ENCODE measurements at regions of chr11 and their contacts with region 1.

Region 1: GRCh38 chr11:65540297-65541092 is 15.6 kb downstream of the SCYL1 start:
- DNase-seq: peak in 1 of 2 experiments; percentile 98
- H3K4me3 ChIP-seq: peak overlapping the region; percentile 32 to 68 (median 46)
- H3K27ac ChIP-seq: no peak overlapping the region
- H3K4me1 ChIP-seq: peaks cover 0 to 9% (median 1%) of the 10 kb centered on the region in 4 experiments; a peak in 5 of 7 replicates
- H3K27me3 ChIP-seq: peaks cover 0 to 38% (median 21%) of the 10 kb centered on the region in 4 experiments; a peak in 6 of 7 replicates
- CTCF ChIP-seq: peak in 2 of 3 experiments; percentile 75 to 88; a peak in 3 of 4 replicates
- EP300 ChIP-seq: no peak
- POLR2A ChIP-seq: no peak; a peak in 1 of 3 replicates
- RAD21 ChIP-seq: peak; percentile 74 to 81

Region 2: GRCh38 chr11:65506770-65507505 is 33.6 kb before region 1 on chr11:
- CTCF ChIA-PET with region 1: interaction called, 3 read pairs
- POLR2A ChIA-PET with region 1: interaction called, 10 read pairs
- DNase-seq: peak in 1 of 2 experiments; percentile 63
- H3K4me3 ChIP-seq: no peak overlapping the region
- H3K27ac ChIP-seq: no peak overlapping the region
- H3K4me1 ChIP-seq: peaks cover 0 to 7% (median 3%) of the 10 kb centered on the region in 4 experiments; a peak in 4 of 7 replicates
- H3K27me3 ChIP-seq: no peaks in the 10 kb centered on the region
- CTCF ChIP-seq: no peak
- EP300 ChIP-seq: no peak
- POLR2A ChIP-seq: peak; percentile 71 to 98
- RAD21 ChIP-seq: no peak

Region 3: GRCh38 chr11:65530157-65530496 is 10.4 kb before region 1 on chr11:
- CTCF ChIA-PET with region 1: interaction called, 15 read pairs
- POLR2A ChIA-PET with region 1: interaction called, 62 read pairs
- DNase-seq: no peak
- H3K4me3 ChIP-seq: no peak overlapping the region
- H3K27ac ChIP-seq: no peak overlapping the region
- H3K4me1 ChIP-seq: peaks cover 0 to 7% (median 5%) of the 10 kb centered on the region in 4 experiments; a peak in 5 of 7 replicates
- H3K27me3 ChIP-seq: no peaks in the 10 kb centered on the region
- CTCF ChIP-seq: peak in 2 of 3 experiments; percentile 49 to 71; a peak in 2 of 4 replicates
- EP300 ChIP-seq: no peak
- POLR2A ChIP-seq: no peak
- RAD21 ChIP-seq: peak; percentile 5 to 46; a peak in 2 of 4 replicates

Region 4: GRCh38 chr11:65558002-65558931 is 17.8 kb after region 1 on chr11 and contains the start of gene LTBP3:
- CTCF ChIA-PET with region 1: interaction called, 284 read pairs
- POLR2A ChIA-PET with region 1: interaction called, 29 read pairs
- DNase-seq: peak in 1 of 2 experiments; percentile 72
- H3K4me3 ChIP-seq: peak within 1 kb of the TSS; percentile 39 to 77 (median 48)
- H3K27ac ChIP-seq: no peak within 1 kb of the TSS
- H3K4me1 ChIP-seq: peaks cover 0 to 51% (median 39%) of the 10 kb centered on the region in 4 experiments; a peak in 6 of 7 replicates
- H3K27me3 ChIP-seq: peaks cover 0 to 32% (median 21%) of the 10 kb centered on the region in 4 experiments; a peak in 5 of 7 replicates
- CTCF ChIP-seq: no peak
- EP300 ChIP-seq: no peak
- POLR2A ChIP-seq: no peak
- RAD21 ChIP-seq: no peak
- total RNA-seq, gene LTBP3: 12.8 and 15.3 TPM in 2 replicates

Region 5: DNA sequence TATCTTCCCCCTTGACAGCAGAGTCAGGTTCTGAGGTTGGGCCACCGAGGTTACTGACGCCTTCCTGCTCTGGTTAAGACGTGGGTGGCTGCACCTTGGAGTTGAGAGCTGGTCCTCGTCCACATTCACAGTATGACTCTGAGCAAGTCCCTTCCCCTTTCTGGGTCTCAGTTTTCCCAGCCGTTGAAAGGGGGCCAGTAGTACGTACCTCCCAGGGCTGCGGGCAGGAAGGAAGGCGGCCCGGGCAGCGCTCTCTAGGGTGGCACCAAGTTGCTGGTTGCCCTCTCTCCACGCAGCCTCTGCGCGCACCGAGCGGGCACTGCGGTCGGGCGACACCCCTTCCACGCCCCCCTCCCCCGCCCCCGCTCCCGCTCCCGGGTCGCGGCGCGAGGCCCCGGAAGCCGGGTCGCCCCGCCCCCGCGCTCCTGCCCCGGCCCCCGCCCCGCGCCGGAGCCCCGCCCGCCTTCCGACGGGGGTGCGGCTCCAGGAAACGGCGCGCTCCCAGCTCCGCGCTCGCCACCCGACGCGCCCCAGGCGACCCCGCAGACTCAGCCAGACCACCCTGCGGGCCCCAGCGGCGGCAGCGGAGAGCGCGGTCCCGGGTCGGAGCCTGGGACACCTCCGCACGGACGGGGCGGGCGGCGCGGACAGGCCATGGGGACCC is 35.2 kb after region 1 on chr11 and contains the start of gene EHBP1L1:
- CTCF ChIA-PET with region 1: interaction called, 284 read pairs
- POLR2A ChIA-PET with region 1: interaction called, 21 read pairs
- DNase-seq: no peak
- H3K4me3 ChIP-seq: peak within 1 kb of the TSS; percentile 27 to 63 (median 40)
- H3K27ac ChIP-seq: no peak within 1 kb of the TSS
- H3K4me1 ChIP-seq: peaks cover 13 to 31% (median 20%) of the 10 kb centered on the region in 4 experiments; a peak in 6 of 7 replicates
- H3K27me3 ChIP-seq: peaks cover 8 to 39% (median 28%) of the 10 kb centered on the region in 4 experiments
- CTCF ChIP-seq: no peak
- EP300 ChIP-seq: no peak
- POLR2A ChIP-seq: no peak
- RAD21 ChIP-seq: no peak
- total RNA-seq, gene EHBP1L1: 6.6 and 7.9 TPM in 2 replicates

Region 6: DNA sequence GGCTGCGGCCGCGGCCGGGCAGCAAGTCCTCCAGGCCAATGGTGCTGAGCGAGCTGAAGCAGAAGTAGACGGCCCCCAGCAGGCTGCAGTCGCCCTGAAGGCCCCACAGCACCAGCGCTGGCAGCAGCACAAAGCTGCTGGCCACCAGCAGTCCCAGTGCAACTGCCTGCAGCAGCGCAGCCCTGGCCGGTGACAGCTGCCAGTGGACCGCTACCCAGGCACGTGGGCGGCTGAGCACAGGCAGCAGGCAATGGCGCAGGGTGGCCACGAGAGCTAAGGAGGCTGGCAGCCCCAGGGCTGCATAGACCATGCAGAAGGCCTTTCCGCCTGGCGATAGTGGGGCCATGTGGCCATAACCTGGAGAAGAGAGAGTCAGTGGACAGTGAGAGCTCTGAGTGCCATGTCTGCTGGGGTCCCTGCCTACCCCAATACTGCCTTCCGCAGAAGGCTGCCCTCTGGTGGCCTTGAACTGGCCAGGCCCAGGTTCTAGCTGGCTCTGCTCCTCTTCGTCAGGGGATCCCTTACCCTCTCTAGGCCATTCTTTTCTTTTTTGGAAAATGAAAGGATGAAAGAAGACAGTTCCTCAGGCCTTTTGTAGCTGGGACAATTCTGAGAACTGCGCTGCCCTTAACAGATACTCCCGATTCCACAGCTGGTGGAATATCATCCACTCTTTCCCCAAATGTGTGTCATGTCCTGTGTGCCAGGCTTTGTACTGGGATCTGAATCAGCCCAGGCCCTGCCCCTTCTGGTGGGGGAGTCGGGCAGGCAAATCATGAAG is 53.2 kb after region 1 on chr11:
- CTCF ChIA-PET with region 1: interaction called, 108 read pairs
- POLR2A ChIA-PET with region 1: interaction called, 14 read pairs
- DNase-seq: no peak
- H3K4me3 ChIP-seq: no peak overlapping the region
- H3K27ac ChIP-seq: no peak overlapping the region
- H3K4me1 ChIP-seq: peaks cover 3 to 10% (median 8%) of the 10 kb centered on the region in 4 experiments
- H3K27me3 ChIP-seq: peaks cover 8 to 27% (median 22%) of the 10 kb centered on the region in 4 experiments
- CTCF ChIP-seq: peak in 2 of 3 experiments; percentile 73 to 90; a peak in 3 of 4 replicates
- EP300 ChIP-seq: no peak
- POLR2A ChIP-seq: no peak
- RAD21 ChIP-seq: peak; percentile 45 to 52; a peak in 3 of 4 replicates

Measured in H1 (cell line).